IMR-90 (cell line): ENCODE measurements at regions of chr15 and their contacts with region 1.

Region 1: GRCh38 chr15:89912674-89913396 is at the start of gene ARPIN:
- DNase-seq: peak; percentile 32
- ATAC-seq: peak; percentile 92
- H3K4me3 ChIP-seq: peak within 1 kb of the TSS; percentile 81
- H3K27ac ChIP-seq: peak within 1 kb of the TSS; percentile 70
- H3K4me1 ChIP-seq: peaks cover 2% of the 10 kb centered on the region; the same call in 1 of the 2 replicates
- H3K27me3 ChIP-seq: no peaks in the 10 kb centered on the region
- CTCF ChIP-seq: no peak
- POLR2A ChIP-seq: no peak
- RAD21 ChIP-seq: no peak
- total RNA-seq, gene ARPIN: 3.9 and 5.6 TPM in 2 replicates

Region 2: DNA sequence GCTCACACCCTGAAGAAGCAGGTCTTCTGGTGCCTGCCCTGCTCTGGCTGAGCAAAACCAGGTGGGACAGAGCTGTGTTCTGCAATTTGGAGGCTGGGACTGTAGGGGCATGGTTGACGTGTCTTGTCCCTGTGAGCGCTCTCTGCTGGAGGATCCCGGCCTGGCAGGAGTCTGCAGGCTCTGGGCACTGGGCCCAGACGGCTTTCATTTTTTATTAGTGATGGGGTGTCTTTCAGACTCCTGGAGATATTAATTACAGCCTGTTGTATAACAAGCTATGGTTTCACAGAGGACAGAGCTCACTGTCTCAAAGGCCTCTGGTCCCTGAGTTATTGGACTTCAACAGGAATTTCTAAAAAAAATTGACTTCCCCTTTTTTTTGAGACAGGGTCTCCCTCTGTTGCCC is 58.8 kb after region 1 on chr15:
- CTCF ChIA-PET with region 1: no interaction called
- POLR2A ChIA-PET with region 1: no interaction called
- dilution Hi-C with region 1: no loop called
- in situ Hi-C with region 1: no loop called
- intact Hi-C with region 1: loop called (anchors 5 kb)
- DNase-seq: peak; percentile 52
- ATAC-seq: peak; percentile 93
- H3K4me3 ChIP-seq: no peak overlapping the region
- H3K27ac ChIP-seq: no peak overlapping the region
- H3K4me1 ChIP-seq: no peaks in the 10 kb centered on the region
- H3K27me3 ChIP-seq: peaks cover 16% of the 10 kb centered on the region
- CTCF ChIP-seq: peak; percentile 63
- POLR2A ChIP-seq: no peak
- RAD21 ChIP-seq: peak; percentile 49

Region 3: DNA sequence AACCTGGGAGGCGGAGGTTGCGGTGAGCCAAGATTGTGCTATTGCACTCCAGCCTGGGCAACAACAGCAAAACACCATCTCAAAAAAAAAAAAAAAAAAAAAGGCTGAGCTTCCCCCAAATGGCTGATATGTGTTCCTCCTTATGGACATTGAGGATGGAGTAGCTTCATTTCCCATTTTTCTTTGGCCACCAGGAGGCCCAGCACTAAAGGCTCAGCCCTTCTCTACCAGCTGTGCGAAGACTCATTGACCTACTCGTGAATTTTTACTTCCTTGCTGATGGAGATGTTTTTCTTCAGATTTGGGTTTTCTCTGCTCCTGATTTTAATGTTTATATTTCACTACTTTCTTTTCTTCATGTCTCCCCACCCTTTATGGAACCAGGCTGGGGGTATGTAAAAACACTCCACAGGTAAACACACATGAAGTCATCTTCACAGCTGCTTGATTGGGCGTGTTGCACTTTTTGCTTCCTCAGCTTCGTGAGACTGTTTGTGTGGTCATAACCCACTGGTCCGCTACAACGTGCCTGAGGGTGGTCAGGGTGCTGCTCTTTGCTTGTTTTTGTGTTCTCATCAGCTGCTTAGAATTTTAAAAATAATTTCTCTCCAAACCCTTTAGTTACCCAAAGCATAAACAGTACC is 301.8 kb after region 1 on chr15:
- CTCF ChIA-PET with region 1: no interaction called
- POLR2A ChIA-PET with region 1: no interaction called
- dilution Hi-C with region 1: no loop called
- in situ Hi-C with region 1: no loop called
- intact Hi-C with region 1: no loop called
- DNase-seq: no peak
- ATAC-seq: no peak
- H3K4me3 ChIP-seq: no peak overlapping the region
- H3K27ac ChIP-seq: no peak overlapping the region
- H3K4me1 ChIP-seq: peaks cover 6% of the 10 kb centered on the region
- H3K27me3 ChIP-seq: no peaks in the 10 kb centered on the region
- CTCF ChIP-seq: no peak; the same call in 1 of the 2 replicates
- POLR2A ChIP-seq: no peak
- RAD21 ChIP-seq: no peak